ENCODE measurements at regions of chr10 and their contacts with region 1.

Region 1: GRCh38 chr10:13105184-13105583 is 5.2 kb downstream of the OPTN start:
- DNase-seq: no peak
- H3K4me3 ChIP-seq: no peak overlapping the region
- H3K4me3 Mint-ChIP-seq: no peak overlapping the region
- H3K27ac Mint-ChIP-seq: no peak overlapping the region
- H3K4me1 ChIP-seq: peaks cover 44% of the 10 kb centered on the region
- H3K4me1 Mint-ChIP-seq: peaks cover 40% of the 10 kb centered on the region
- H3K27me3 ChIP-seq: no peaks in the 10 kb centered on the region
- H3K27me3 Mint-ChIP-seq: no peaks in the 10 kb centered on the region
- CTCF ChIP-seq: no peak

Region 2: DNA sequence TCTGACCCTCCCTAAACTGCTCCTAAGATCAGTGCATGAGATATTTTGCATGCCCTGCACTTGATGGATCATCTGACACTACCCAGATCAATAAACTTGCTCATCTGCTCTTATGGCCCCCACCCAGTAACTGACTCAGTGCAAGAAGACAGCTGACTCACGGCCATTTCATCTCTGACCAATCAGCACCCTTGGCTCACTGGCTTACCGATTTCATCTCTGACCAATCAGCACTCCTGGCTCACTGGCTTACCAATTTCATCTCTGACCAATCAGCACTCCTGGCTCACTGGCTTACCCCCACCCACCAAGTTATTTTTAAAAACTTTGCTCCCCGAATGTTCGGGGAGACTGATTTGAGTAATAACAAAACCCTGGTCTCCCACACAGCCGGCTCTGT is 42.4 kb before region 1 on chr10:
- CTCF ChIA-PET with region 1: no interaction called
- POLR2A ChIA-PET with region 1: no interaction called
- intact Hi-C with region 1: no loop called
- DNase-seq: no peak
- H3K4me3 ChIP-seq: no peak overlapping the region
- H3K4me3 Mint-ChIP-seq: no peak overlapping the region
- H3K27ac Mint-ChIP-seq: no peak overlapping the region
- H3K4me1 ChIP-seq: 0 out of 2 replicates have a peak, but pooled peaks cover 4% of the 10 kb centered on the region
- H3K4me1 Mint-ChIP-seq: no peaks in the 10 kb centered on the region
- H3K27me3 ChIP-seq: no peaks in the 10 kb centered on the region
- H3K27me3 Mint-ChIP-seq: peaks cover 2% of the 10 kb centered on the region
- CTCF ChIP-seq: no peak

Region 3: DNA sequence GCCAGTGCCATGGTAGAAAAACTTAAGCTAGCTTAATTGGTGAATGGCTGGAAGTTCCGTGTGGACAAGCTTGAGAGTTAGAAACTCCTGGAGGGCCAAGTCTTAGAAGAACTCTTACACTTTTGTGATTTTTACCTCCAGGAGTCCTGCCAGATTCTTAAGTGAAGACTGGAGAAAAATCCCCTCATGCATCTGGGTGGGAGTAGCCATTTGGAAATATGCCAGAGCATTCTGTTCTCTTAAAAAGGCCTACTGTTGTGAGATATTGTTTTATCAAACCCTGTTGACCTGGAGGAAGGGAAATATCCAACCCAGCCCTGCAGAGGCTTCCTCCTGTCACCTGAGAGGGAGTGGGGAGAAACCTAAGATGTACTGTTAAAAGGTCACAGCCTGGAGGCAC is 38.6 kb after region 1 on chr10:
- CTCF ChIA-PET with region 1: no interaction called
- POLR2A ChIA-PET with region 1: no interaction called
- intact Hi-C with region 1: loop called (anchors 5 kb)
- DNase-seq: no peak
- H3K4me3 ChIP-seq: no peak overlapping the region
- H3K4me3 Mint-ChIP-seq: no peak overlapping the region
- H3K27ac Mint-ChIP-seq: no peak overlapping the region
- H3K4me1 ChIP-seq: no peaks in the 10 kb centered on the region
- H3K4me1 Mint-ChIP-seq: no peaks in the 10 kb centered on the region
- H3K27me3 ChIP-seq: no peaks in the 10 kb centered on the region
- H3K27me3 Mint-ChIP-seq: no peaks in the 10 kb centered on the region
- CTCF ChIP-seq: no peak

Region 4: DNA sequence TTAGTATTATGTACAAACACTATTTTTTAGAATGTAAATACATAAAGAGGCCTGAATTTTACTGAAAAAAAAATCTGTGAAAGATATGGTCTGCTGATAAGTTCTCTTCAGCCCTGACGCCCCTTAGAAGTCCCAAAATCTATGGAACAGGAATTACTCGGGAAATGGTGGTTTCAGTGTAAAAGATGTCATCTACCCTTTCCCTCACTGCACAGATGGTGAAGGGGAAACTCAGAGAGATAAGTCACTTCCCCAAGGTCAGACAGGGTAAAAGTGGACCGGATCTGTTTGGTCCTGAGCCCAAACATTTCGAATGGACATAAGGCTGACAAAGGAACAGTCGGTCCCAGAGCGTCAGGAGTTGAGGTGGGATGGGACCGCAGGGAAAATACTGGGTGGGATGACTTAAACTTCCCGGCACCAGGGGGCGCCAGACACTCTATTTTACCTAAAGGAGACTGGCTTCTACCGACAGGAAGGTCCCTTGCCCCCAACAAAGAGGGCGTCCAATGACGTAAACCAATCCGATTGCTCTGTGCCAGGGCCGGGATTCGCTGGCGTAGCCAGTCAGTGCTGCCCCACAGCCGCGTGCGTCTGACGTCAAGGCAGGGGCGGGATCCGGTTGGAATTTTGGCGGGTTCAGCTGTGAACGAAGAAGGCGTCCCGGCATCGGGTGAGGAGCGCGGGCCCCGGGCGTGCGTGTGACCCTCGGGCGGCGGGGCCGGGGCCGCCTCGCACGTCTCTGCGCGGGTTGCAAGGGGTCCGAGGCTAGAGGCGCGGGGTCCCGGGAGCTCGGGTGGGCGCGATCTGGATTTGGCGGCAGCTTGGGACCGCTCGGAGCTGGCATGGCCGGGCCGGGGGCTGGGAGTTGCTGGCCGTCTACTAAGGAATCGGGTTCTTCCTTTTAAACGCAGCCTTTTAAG is 56.0 kb after region 1 on chr10 and contains the start of gene MCM10:
- CTCF ChIA-PET with region 1: interaction called, 6 read pairs
- POLR2A ChIA-PET with region 1: no interaction called
- intact Hi-C with region 1: loop called (anchors 2 kb)
- DNase-seq: peak; percentile 100
- H3K4me3 ChIP-seq: peak within 1 kb of the TSS; percentile 74
- H3K4me3 Mint-ChIP-seq: peak within 1 kb of the TSS; percentile 78
- H3K27ac Mint-ChIP-seq: peak within 1 kb of the TSS; percentile 61
- H3K4me1 ChIP-seq: peaks cover 4% of the 10 kb centered on the region; the same call in 1 of the 2 replicates
- H3K4me1 Mint-ChIP-seq: peaks cover 16% of the 10 kb centered on the region
- H3K27me3 ChIP-seq: no peaks in the 10 kb centered on the region
- H3K27me3 Mint-ChIP-seq: no peaks in the 10 kb centered on the region
- CTCF ChIP-seq: peak; percentile 91 to 92
- total RNA-seq, gene MCM10: 55.0 and 62.6 TPM in 2 replicates